ENCODE measurements at regions of chr4 and their contacts with region 1.

Region 1: GRCh38 chr4:48195374-48195773 is 61.3 kb upstream of the TXK start:
- DNase-seq: no peak
- ATAC-seq: peak; percentile 48
- H3K4me3 ChIP-seq: peak overlapping the region; percentile 81
- H3K27ac ChIP-seq: peak overlapping the region; percentile 86
- H3K4me1 ChIP-seq: peaks cover 46% of the 10 kb centered on the region
- H3K27me3 ChIP-seq: no peaks in the 10 kb centered on the region
- CTCF ChIP-seq: no peak
- EP300 ChIP-seq: peak in 1 of 2 experiments; percentile 20; a peak in 1 of 4 replicates
- POLR2A ChIP-seq: no peak
- RAD21 ChIP-seq: no peak

Region 2: DNA sequence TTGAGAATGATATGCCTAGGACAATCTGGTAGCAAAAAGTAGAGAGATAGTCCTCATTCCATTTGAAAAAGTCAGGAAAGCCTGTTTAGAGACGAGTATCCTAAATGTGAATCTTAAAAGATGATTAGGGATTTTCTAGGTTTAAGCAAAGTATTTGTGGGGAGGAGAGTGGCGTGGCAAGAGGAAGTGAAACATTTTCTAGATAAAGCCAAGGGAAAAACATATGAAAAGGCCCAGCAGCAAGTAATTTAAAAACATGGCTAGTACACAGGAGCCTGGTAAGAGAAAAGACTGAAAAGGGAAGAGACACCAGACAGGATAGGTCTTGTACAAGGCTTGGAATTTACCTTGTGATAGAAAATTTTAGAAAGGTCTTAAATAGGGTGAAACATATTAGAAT is 403.4 kb before region 1 on chr4:
- CTCF ChIA-PET with region 1: no interaction called
- POLR2A ChIA-PET with region 1: no interaction called
- RAD21 ChIA-PET with region 1: no interaction called
- SMC1A ChIA-PET with region 1: no interaction called
- in situ Hi-C with region 1: no loop called
- intact Hi-C with region 1: no loop called
- DNase-seq: no peak
- ATAC-seq: peak; percentile 47; the same call in 2 of the 3 replicates
- H3K4me3 ChIP-seq: no peak overlapping the region
- H3K27ac ChIP-seq: no peak overlapping the region
- H3K4me1 ChIP-seq: no peaks in the 10 kb centered on the region
- H3K27me3 ChIP-seq: no peaks in the 10 kb centered on the region
- CTCF ChIP-seq: no peak
- EP300 ChIP-seq: no peak
- POLR2A ChIP-seq: no peak
- RAD21 ChIP-seq: no peak

Region 3: DNA sequence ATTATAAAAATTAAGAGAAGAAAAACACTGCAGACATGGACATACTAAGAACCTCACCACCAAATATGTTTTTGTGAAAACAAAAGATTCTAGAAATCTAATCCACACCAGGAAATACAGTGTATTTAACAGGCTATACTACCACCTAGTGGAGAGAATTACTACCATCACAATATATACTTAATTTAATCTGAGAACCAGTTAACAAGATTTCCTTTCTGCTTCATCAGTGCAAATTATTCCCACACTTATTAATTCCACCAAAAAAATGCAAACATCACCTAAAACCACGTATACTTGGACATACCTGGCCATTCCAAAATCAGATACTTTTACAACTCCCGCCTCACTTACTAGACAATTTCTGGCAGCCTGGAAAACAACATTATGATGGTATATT is 54.3 kb before region 1 on chr4:
- CTCF ChIA-PET with region 1: interaction called, 3 read pairs
- POLR2A ChIA-PET with region 1: interaction called, 3 read pairs
- RAD21 ChIA-PET with region 1: interaction called, 5 read pairs
- SMC1A ChIA-PET with region 1: interaction called, 10 read pairs
- in situ Hi-C with region 1: no loop called
- intact Hi-C with region 1: no loop called
- DNase-seq: no peak
- ATAC-seq: peak; percentile 75
- H3K4me3 ChIP-seq: no peak overlapping the region
- H3K27ac ChIP-seq: no peak overlapping the region
- H3K4me1 ChIP-seq: peaks cover 17% of the 10 kb centered on the region
- H3K27me3 ChIP-seq: no peaks in the 10 kb centered on the region
- CTCF ChIP-seq: peak; percentile 21 to 55 (median 49); a peak in 4 of 6 replicates
- EP300 ChIP-seq: no peak
- POLR2A ChIP-seq: no peak
- RAD21 ChIP-seq: peak; percentile 37; the same call in 1 of the 2 replicates

Region 4: GRCh38 chr4:48212165-48212564 is 16.8 kb after region 1 on chr4:
- CTCF ChIA-PET with region 1: interaction called, 40 read pairs
- POLR2A ChIA-PET with region 1: interaction called, 113 read pairs
- RAD21 ChIA-PET with region 1: interaction called, 147 read pairs
- SMC1A ChIA-PET with region 1: no interaction called
- in situ Hi-C with region 1: no loop called
- intact Hi-C with region 1: no loop called
- DNase-seq: no peak
- ATAC-seq: peak; percentile 85
- H3K4me3 ChIP-seq: peak overlapping the region; percentile 54; the same call in 1 of the 2 replicates
- H3K27ac ChIP-seq: peak overlapping the region; percentile 90
- H3K4me1 ChIP-seq: peaks cover 43% of the 10 kb centered on the region
- H3K27me3 ChIP-seq: no peaks in the 10 kb centered on the region
- CTCF ChIP-seq: no peak
- EP300 ChIP-seq: peak; percentile 60 to 72; a peak in 3 of 4 replicates
- POLR2A ChIP-seq: peak; percentile 37; the same call in 1 of the 2 replicates
- RAD21 ChIP-seq: no peak

Region 5: GRCh38 chr4:48247142-48247877 is 51.9 kb after region 1 on chr4:
- CTCF ChIA-PET with region 1: interaction called, 5 read pairs
- POLR2A ChIA-PET with region 1: interaction called, 11 read pairs
- RAD21 ChIA-PET with region 1: interaction called, 11 read pairs
- SMC1A ChIA-PET with region 1: interaction called, 10 read pairs
- in situ Hi-C with region 1: no loop called
- intact Hi-C with region 1: no loop called
- DNase-seq: peak; percentile 51
- ATAC-seq: peak; percentile 74
- H3K4me3 ChIP-seq: 0 out of 2 replicates have a peak overlapping the region, but pooled peaks have one; percentile 25
- H3K27ac ChIP-seq: peak overlapping the region; percentile 79
- H3K4me1 ChIP-seq: peaks cover 28% of the 10 kb centered on the region
- H3K27me3 ChIP-seq: no peaks in the 10 kb centered on the region
- CTCF ChIP-seq: no peak
- EP300 ChIP-seq: no peak
- POLR2A ChIP-seq: no peak
- RAD21 ChIP-seq: no peak

Region 6: GRCh38 chr4:48340965-48341775 is 145.8 kb after region 1 on chr4 and contains the start of gene SLAIN2:
- CTCF ChIA-PET with region 1: no interaction called
- POLR2A ChIA-PET with region 1: no interaction called
- RAD21 ChIA-PET with region 1: interaction called, 3 read pairs
- SMC1A ChIA-PET with region 1: no interaction called
- in situ Hi-C with region 1: no loop called
- intact Hi-C with region 1: loop called (anchors 5 kb)
- DNase-seq: peak; percentile 77
- ATAC-seq: peak; percentile 89
- H3K4me3 ChIP-seq: peak within 1 kb of the TSS; percentile 94
- H3K27ac ChIP-seq: peak within 1 kb of the TSS; percentile 88
- H3K4me1 ChIP-seq: no peaks in the 10 kb centered on the region
- H3K27me3 ChIP-seq: no peaks in the 10 kb centered on the region
- CTCF ChIP-seq: peak in 2 of 3 experiments; percentile 16 to 33; a peak in 1 of 6 replicates
- EP300 ChIP-seq: no peak
- POLR2A ChIP-seq: peak; percentile 96
- RAD21 ChIP-seq: no peak
- polyA plus RNA-seq, gene SLAIN2: 4.3 to 6.0 TPM

Region 7: GRCh38 chr4:48396043-48396442 is 200.7 kb after region 1 on chr4:
- CTCF ChIA-PET with region 1: no interaction called
- POLR2A ChIA-PET with region 1: no interaction called
- RAD21 ChIA-PET with region 1: no interaction called
- SMC1A ChIA-PET with region 1: no interaction called
- in situ Hi-C with region 1: no loop called
- intact Hi-C with region 1: no loop called
- DNase-seq: no peak
- ATAC-seq: no peak
- H3K4me3 ChIP-seq: no peak overlapping the region
- H3K27ac ChIP-seq: no peak overlapping the region
- H3K4me1 ChIP-seq: no peaks in the 10 kb centered on the region
- H3K27me3 ChIP-seq: no peaks in the 10 kb centered on the region
- CTCF ChIP-seq: no peak
- EP300 ChIP-seq: no peak
- POLR2A ChIP-seq: no peak
- RAD21 ChIP-seq: no peak

Measured in GM12878 (cell line).